ENCODE measurements at regions of chr2 and their contacts with region 1.

Region 1: DNA sequence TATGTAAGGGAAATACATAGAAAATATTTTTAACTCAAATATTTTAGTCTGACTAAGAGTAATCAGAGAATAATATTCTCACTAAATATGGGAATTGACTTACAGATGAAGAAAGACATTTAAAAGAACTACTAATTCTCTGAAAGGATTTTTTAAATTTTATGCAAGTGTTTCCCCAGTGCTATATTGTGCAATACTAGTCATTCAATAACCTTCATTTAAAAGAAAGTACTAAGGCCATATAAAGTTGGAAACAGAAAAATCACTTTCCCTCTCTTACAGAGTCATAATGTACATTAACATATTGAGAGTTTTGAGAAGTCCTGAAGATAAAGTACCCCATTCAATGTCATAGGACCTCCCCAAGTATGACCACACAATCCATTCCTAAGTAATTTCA is 584.6 kb upstream of the ACVR2A start:
- DNase-seq: no peak
- ATAC-seq: no peak
- H3K4me3 ChIP-seq: no peak overlapping the region
- H3K27ac ChIP-seq: no peak overlapping the region
- H3K4me1 ChIP-seq: no peaks in the 10 kb centered on the region
- H3K27me3 ChIP-seq: no peaks in the 10 kb centered on the region
- CTCF ChIP-seq: no peak
- POLR2A ChIP-seq: no peak

Region 2: GRCh38 chr2:147425437-147426029 is 165.3 kb after region 1 on chr2:
- intact Hi-C with region 1: loop called in 1 of 10 experiments (anchors 10 kb)
- DNase-seq: no peak
- ATAC-seq: peak in 1 of 4 donors; percentile 62
- H3K4me3 ChIP-seq: no peak overlapping the region
- H3K27ac ChIP-seq: no peak overlapping the region
- H3K4me1 ChIP-seq: peaks cover 0 to 11% (median 0%) of the 10 kb centered on the region in 12 donors
- H3K27me3 ChIP-seq: no peaks in the 10 kb centered on the region
- CTCF ChIP-seq: no peak
- POLR2A ChIP-seq: no peak

Region 3: GRCh38 chr2:147511491-147511948 is 251.3 kb after region 1 on chr2:
- intact Hi-C with region 1: no loop called
- DNase-seq: peak; percentile 30 to 64 (median 60)
- ATAC-seq: peak; percentile 58 to 94 (median 87)
- H3K4me3 ChIP-seq: peak overlapping the region in 2 of 12 donors; percentile 2 to 26
- H3K27ac ChIP-seq: peak overlapping the region in 5 of 12 donors; percentile 1 to 47 (median 25)
- H3K4me1 ChIP-seq: peaks cover 0 to 7% (median 0%) of the 10 kb centered on the region in 12 donors
- H3K27me3 ChIP-seq: no peaks in the 10 kb centered on the region
- CTCF ChIP-seq: no peak
- POLR2A ChIP-seq: no peak

Measured in heart left ventricle (tissue), 16 donors.